CD14-positive monocyte (primary cell): ENCODE measurements at regions of chr2 and their contacts with region 1.

Region 1: DNA sequence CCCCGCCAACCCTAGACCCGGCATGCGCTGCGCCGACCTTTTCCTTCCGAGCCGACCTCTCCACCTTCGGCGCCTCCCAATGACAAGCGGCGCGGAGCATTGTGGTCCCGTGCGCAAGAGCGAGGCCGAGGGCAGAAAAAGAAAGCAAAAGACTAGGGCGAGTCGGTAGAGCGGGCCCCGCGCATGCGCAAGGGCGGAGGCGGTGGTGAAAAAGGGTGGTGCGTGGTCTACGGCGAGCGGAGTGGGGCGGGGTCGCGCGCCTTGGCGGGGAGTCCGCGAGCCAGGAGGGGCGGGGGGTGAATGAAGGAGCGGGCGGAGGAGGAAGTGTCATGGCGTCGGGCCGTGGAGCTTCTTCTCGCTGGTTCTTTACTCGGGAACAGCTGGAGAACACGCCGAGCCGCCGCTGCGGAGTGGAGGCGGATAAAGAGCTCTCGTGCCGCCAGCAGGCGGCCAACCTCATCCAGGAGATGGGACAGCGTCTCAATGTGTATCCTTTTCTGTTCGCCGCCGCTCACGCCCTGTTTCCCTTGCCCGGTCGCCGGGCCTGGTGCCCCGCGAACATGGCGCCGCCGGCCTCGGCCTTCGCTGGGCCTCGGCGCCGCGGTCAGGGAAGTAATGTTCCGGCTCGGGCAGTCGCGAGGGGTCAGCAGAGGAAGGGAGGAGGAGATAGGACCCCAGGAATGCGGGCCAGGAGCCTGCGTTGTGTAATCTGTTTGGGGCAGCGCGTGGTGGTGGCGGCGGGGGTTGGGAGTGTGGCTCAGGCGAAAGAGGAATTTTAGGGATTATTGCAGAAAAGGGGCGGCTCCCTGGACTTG is at the start of gene CCNT2:
- DNase-seq: peak; percentile 98 to 100 (median 99)
- H3K4me3 ChIP-seq: peak within 1 kb of the TSS; percentile 90 to 95 (median 92)
- H3K4me3 Mint-ChIP-seq: peak within 1 kb of the TSS; percentile 98
- H3K27ac ChIP-seq: peak within 1 kb of the TSS; percentile 98
- H3K27ac Mint-ChIP-seq: peak within 1 kb of the TSS; percentile 96 to 99 (median 99)
- H3K4me1 ChIP-seq: peaks cover 24 to 46% of the 10 kb centered on the region in 2 donors
- H3K4me1 Mint-ChIP-seq: peaks cover 27% of the 10 kb centered on the region
- H3K27me3 ChIP-seq: no peaks in the 10 kb centered on the region
- H3K27me3 Mint-ChIP-seq: peaks cover 0 to 1% (median 0%) of the 10 kb centered on the region in 3 donors
- CTCF ChIP-seq: no peak
- polyA plus RNA-seq, gene CCNT2: 8.3 to 20.5 (median 12.2) TPM

Region 2: GRCh38 chr2:134118279-134119116 is 800.2 kb before region 1 on chr2:
- intact Hi-C with region 1: loop called (anchors 5 to 10 kb)
- DNase-seq: peak; percentile 75 to 87 (median 85)
- H3K4me3 ChIP-seq: peak overlapping the region in 1 of 3 experiments; percentile 42
- H3K4me3 Mint-ChIP-seq: peak overlapping the region; percentile 51 to 64
- H3K27ac ChIP-seq: no peak overlapping the region
- H3K27ac Mint-ChIP-seq: peak overlapping the region in 3 of 7 donors; percentile 8 to 67 (median 36)
- H3K4me1 ChIP-seq: peaks cover 20 to 31% of the 10 kb centered on the region in 2 donors
- H3K4me1 Mint-ChIP-seq: peaks cover 34% of the 10 kb centered on the region
- H3K27me3 ChIP-seq: no peaks in the 10 kb centered on the region
- H3K27me3 Mint-ChIP-seq: no peaks in the 10 kb centered on the region
- CTCF ChIP-seq: peak; percentile 79

Region 3: GRCh38 chr2:134739879-134740301 is 178.8 kb before region 1 on chr2:
- intact Hi-C with region 1: loop called in 1 of 2 experiments (anchors 10 kb)
- DNase-seq: peak; percentile 96 to 99 (median 98)
- H3K4me3 ChIP-seq: no peak overlapping the region
- H3K4me3 Mint-ChIP-seq: no peak overlapping the region
- H3K27ac ChIP-seq: peak overlapping the region; percentile 74 to 91
- H3K27ac Mint-ChIP-seq: peak overlapping the region; percentile 94 to 97 (median 95)
- H3K4me1 ChIP-seq: peaks cover 54 to 56% of the 10 kb centered on the region in 2 donors
- H3K4me1 Mint-ChIP-seq: peaks cover 57% of the 10 kb centered on the region
- H3K27me3 ChIP-seq: no peaks in the 10 kb centered on the region
- H3K27me3 Mint-ChIP-seq: peaks cover 0 to 7% (median 2%) of the 10 kb centered on the region in 3 donors
- CTCF ChIP-seq: no peak

Region 4: GRCh38 chr2:134954065-134954464 is 35.3 kb after region 1 on chr2:
- intact Hi-C with region 1: no loop called
- DNase-seq: no peak
- H3K4me3 ChIP-seq: no peak overlapping the region
- H3K4me3 Mint-ChIP-seq: no peak overlapping the region
- H3K27ac ChIP-seq: peak overlapping the region in 1 of 2 donors; percentile 4
- H3K27ac Mint-ChIP-seq: peak overlapping the region in 3 of 7 donors; percentile 48 to 80 (median 63)
- H3K4me1 ChIP-seq: no peaks in the 10 kb centered on the region
- H3K4me1 Mint-ChIP-seq: peaks cover 3% of the 10 kb centered on the region
- H3K27me3 ChIP-seq: no peaks in the 10 kb centered on the region
- H3K27me3 Mint-ChIP-seq: no peaks in the 10 kb centered on the region
- CTCF ChIP-seq: no peak

Region 5: DNA sequence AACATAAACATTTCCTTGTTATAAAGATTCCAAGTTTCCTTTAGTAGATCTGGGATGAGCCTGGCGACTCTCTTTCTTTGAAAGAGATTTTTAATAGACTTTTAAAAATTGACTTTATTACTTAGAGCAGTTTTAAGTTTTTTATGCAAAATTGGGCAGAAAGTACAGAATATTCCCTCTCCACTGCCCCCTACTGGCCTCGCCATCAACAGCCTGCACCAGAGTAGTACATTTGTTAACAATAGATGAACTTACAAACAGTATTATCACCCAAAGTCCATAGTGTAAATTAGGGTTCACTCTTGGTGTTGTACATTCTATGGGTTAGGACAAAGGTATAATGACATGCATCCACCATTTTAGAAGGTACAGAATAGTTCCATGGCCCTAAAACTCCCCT is 124.6 kb after region 1 on chr2:
- intact Hi-C with region 1: loop called in 1 of 2 experiments (anchors 10 kb)
- DNase-seq: peak in 1 of 3 donors; percentile 10
- H3K4me3 ChIP-seq: no peak overlapping the region
- H3K4me3 Mint-ChIP-seq: no peak overlapping the region
- H3K27ac ChIP-seq: no peak overlapping the region
- H3K27ac Mint-ChIP-seq: no peak overlapping the region
- H3K4me1 ChIP-seq: no peaks in the 10 kb centered on the region
- H3K4me1 Mint-ChIP-seq: no peaks in the 10 kb centered on the region
- H3K27me3 ChIP-seq: no peaks in the 10 kb centered on the region
- H3K27me3 Mint-ChIP-seq: peaks cover 8 to 12% (median 8%) of the 10 kb centered on the region in 3 donors
- CTCF ChIP-seq: peak; percentile 70

Region 6: GRCh38 chr2:135052042-135052876 is 133.5 kb after region 1 on chr2 and contains the start of gene RAB3GAP1:
- intact Hi-C with region 1: loop called (anchors 10 kb)
- DNase-seq: peak; percentile 76 to 81 (median 77)
- H3K4me3 ChIP-seq: peak within 1 kb of the TSS; percentile 89 to 97 (median 94)
- H3K4me3 Mint-ChIP-seq: peak within 1 kb of the TSS; percentile 99
- H3K27ac ChIP-seq: peak within 1 kb of the TSS; percentile 99 to 100
- H3K27ac Mint-ChIP-seq: peak within 1 kb of the TSS; percentile 100
- H3K4me1 ChIP-seq: peaks cover 17 to 23% of the 10 kb centered on the region in 2 donors
- H3K4me1 Mint-ChIP-seq: peaks cover 27% of the 10 kb centered on the region
- H3K27me3 ChIP-seq: no peaks in the 10 kb centered on the region
- H3K27me3 Mint-ChIP-seq: peaks cover 0 to 1% (median 0%) of the 10 kb centered on the region in 3 donors
- CTCF ChIP-seq: no peak
- polyA plus RNA-seq, gene RAB3GAP1: 8.0 to 17.4 (median 11.3) TPM

Region 7: DNA sequence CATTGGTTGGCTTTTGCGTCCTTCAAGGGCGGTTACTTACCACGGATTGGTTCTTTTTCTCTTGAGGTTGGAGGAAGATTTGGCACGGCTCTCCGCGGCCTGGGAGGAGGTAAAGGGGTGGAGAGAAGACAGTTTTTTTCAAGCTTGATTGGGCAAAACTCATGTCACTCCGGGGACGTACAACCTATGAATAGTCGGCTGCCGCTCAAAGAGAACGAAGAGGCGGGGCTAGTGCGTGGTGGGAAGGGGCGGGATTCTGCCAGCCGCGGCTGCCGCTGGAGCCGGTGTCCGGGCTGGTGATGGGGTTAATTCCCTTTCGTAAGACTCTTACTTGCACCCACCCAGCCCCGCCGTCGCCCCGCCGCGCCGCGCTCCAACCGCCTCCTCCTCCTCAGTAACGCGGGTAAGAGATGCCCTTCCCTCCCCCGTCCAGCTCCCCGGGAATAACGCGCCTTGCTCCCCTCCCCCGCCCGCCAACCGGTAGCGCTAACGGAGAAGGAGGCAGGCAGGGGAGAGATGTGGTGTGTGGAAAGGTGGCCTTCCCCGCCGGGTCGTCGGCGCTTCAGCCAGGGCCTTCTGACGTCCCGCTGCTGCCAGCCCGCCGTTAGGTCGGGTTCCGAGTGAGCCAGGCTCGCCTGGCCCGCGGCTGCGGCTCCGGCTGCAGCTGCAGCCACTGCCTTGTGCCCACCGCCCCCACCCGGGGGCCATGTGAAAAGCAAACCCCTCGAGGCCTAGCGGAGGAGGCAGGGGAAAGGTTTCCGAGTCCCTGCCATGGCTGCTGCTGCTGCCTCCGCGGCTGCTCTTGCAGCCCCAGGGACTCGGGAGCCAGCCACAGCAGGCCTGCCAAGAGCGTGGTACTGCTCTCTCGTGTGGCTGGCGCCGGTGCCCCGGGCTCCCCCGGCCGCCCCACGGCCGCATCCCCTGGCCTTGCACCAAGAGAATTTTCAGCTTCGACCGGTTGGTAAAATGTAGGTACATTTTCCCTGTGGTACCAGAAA is 612.8 kb after region 1 on chr2 and contains the start of gene R3HDM1:
- intact Hi-C with region 1: loop called (anchors 5 kb)
- DNase-seq: peak; percentile 99
- H3K4me3 ChIP-seq: peak within 1 kb of the TSS; percentile 92 to 98 (median 98)
- H3K4me3 Mint-ChIP-seq: no peak within 1 kb of the TSS
- H3K27ac ChIP-seq: peak within 1 kb of the TSS; percentile 90 to 96
- H3K27ac Mint-ChIP-seq: peak within 1 kb of the TSS in 4 of 7 donors; percentile 31 to 73 (median 58)
- H3K4me1 ChIP-seq: peaks cover 14 to 26% of the 10 kb centered on the region in 2 donors
- H3K4me1 Mint-ChIP-seq: peaks cover 18% of the 10 kb centered on the region
- H3K27me3 ChIP-seq: no peaks in the 10 kb centered on the region
- H3K27me3 Mint-ChIP-seq: peaks cover 0 to 1% (median 0%) of the 10 kb centered on the region in 3 donors
- CTCF ChIP-seq: no peak
- polyA plus RNA-seq, gene R3HDM1: 5.4 to 24.5 (median 13.1) TPM

Region 8: GRCh38 chr2:135741395-135742324 is 822.9 kb after region 1 on chr2 and contains the start of gene UBXN4:
- intact Hi-C with region 1: loop called in 1 of 2 experiments (anchors 2 kb)
- DNase-seq: peak; percentile 98 to 99 (median 98)
- H3K4me3 ChIP-seq: peak within 1 kb of the TSS; percentile 88 to 99 (median 90)
- H3K4me3 Mint-ChIP-seq: peak within 1 kb of the TSS; percentile 94 to 96
- H3K27ac ChIP-seq: peak within 1 kb of the TSS; percentile 98 to 100
- H3K27ac Mint-ChIP-seq: peak within 1 kb of the TSS; percentile 96 to 99 (median 99)
- H3K4me1 ChIP-seq: peaks cover 10 to 18% of the 10 kb centered on the region in 2 donors
- H3K4me1 Mint-ChIP-seq: peaks cover 23% of the 10 kb centered on the region
- H3K27me3 ChIP-seq: no peaks in the 10 kb centered on the region
- H3K27me3 Mint-ChIP-seq: peaks cover 0 to 1% (median 0%) of the 10 kb centered on the region in 3 donors
- CTCF ChIP-seq: peak; percentile 32
- polyA plus RNA-seq, gene UBXN4: 53.8 to 107 (median 74.2) TPM